T-cell (primary cell): ENCODE measurements at regions of chr4 and their contacts with region 1.

Region 1: DNA sequence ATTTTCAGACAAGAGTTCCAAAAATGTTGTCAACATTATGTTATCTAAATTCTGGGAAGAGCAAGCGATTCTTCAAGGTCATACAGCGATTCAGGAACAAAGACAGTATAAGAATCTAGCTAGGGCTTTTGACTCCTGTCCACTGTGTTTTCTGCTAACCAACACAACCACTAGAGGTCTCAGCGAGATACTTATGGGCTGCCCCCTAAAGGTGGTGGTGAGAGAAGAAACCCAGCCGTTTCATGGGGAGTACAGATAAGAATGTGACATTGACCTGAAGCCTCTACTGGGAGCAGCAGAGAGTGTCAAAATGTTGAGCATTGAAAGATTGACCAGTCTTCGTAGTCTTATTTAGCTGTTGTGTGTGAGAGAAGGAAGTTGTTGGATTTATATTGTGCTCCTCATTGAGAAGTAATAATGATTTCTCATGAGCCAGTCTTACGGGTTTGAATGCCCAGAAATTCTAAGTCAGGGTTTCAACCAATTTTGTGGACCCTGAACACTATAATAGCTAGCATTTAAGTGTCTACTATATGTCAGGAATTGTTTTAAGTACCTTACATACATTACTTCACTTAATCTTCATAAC is 168.3 kb downstream of the SPRY1 start:
- DNase-seq: peak in 33 of 35 experiments; percentile 3 to 74 (median 33)
- ATAC-seq: peak; percentile 83 to 98 (median 92)
- H3K4me3 ChIP-seq: no peak overlapping the region
- H3K4me3 Mint-ChIP-seq: no peak overlapping the region
- H3K27ac ChIP-seq: no peak overlapping the region
- H3K27ac Mint-ChIP-seq: no peak overlapping the region
- H3K4me1 ChIP-seq: no peaks in the 10 kb centered on the region
- H3K4me1 Mint-ChIP-seq: peaks cover 0 to 2% (median 0%) of the 10 kb centered on the region in 3 donors
- H3K27me3 ChIP-seq: no peaks in the 10 kb centered on the region
- H3K27me3 Mint-ChIP-seq: no peaks in the 10 kb centered on the region

Region 2: GRCh38 chr4:123661080-123661737 is 96.4 kb after region 1 on chr4:
- CTCF ChIA-PET with region 1: interaction called, 4 to 15 read pairs
- POLR2A ChIA-PET with region 1: no interaction called
- DNase-seq: peak in 1 of 35 experiments; percentile 23
- ATAC-seq: no peak
- H3K4me3 ChIP-seq: no peak overlapping the region
- H3K4me3 Mint-ChIP-seq: no peak overlapping the region
- H3K27ac ChIP-seq: no peak overlapping the region
- H3K27ac Mint-ChIP-seq: no peak overlapping the region
- H3K4me1 ChIP-seq: no peaks in the 10 kb centered on the region
- H3K4me1 Mint-ChIP-seq: no peaks in the 10 kb centered on the region
- H3K27me3 ChIP-seq: no peaks in the 10 kb centered on the region
- H3K27me3 Mint-ChIP-seq: peaks cover 0 to 3% of the 10 kb centered on the region in 2 donors